CD4-positive, alpha-beta T cell (primary cell): ENCODE measurements at regions of chr2 and their contacts with region 1.

Region 1: DNA sequence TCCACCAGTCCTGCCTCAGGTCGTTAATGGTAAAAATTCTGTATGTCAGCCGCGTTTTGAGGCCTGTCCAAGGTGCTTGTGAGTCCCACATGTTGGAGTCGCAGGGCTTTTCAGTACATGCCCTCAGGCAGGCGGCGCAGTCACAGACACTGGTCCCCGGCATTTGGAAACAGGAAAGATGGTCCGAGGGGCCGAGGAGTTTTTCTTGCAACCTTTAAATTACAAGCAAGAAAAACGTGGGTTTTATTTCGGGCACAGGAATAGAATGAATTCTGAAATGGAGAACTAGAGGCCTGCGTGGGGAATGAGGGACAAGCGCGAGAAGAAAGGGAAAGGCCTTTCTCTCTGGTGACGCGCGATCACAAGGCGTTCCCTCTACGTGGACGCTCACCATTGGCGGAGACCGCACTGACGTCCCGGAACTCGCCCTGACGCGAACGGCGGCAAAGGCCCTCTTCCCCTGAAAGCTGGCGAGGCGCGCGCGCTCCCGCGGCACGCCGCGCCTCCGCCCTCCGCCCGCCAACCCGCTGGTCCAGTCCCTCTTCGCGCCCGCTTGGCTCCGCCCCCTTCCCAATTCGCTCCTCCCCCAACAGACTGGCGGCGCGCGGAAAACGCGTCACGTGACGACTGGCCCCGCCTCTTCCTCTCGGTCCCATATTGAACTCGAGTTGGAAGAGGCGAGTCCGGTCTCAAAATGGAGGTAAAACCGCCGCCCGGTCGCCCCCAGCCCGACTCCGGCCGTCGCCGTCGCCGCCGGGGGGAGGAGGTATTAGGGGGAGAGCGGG is at the start of gene HNRNPA3:
- DNase-seq: peak; percentile 99 to 100 (median 100)
- ATAC-seq: peak; percentile 81
- H3K4me3 ChIP-seq: peak within 1 kb of the TSS; percentile 86
- H3K4me3 Mint-ChIP-seq: peak within 1 kb of the TSS; percentile 88
- H3K27ac ChIP-seq: peak within 1 kb of the TSS; percentile 98 to 100
- H3K27ac Mint-ChIP-seq: peak within 1 kb of the TSS; percentile 99
- H3K4me1 ChIP-seq: peaks cover 37% of the 10 kb centered on the region
- H3K4me1 Mint-ChIP-seq: peaks cover 61% of the 10 kb centered on the region
- H3K27me3 ChIP-seq: no peaks in the 10 kb centered on the region
- H3K27me3 Mint-ChIP-seq: no peaks in the 10 kb centered on the region
- CTCF ChIP-seq: peak; percentile 33
- total RNA-seq, gene HNRNPA3: 162 to 167 TPM

Region 2: GRCh38 chr2:177106212-177106611 is 106.1 kb before region 1 on chr2:
- CTCF ChIA-PET with region 1: no interaction called
- POLR2A ChIA-PET with region 1: no interaction called
- intact Hi-C with region 1: no loop called
- DNase-seq: peak in 1 of 14 experiments; percentile 1
- ATAC-seq: no peak
- H3K4me3 ChIP-seq: no peak overlapping the region
- H3K4me3 Mint-ChIP-seq: no peak overlapping the region
- H3K27ac ChIP-seq: no peak overlapping the region
- H3K27ac Mint-ChIP-seq: no peak overlapping the region
- H3K4me1 ChIP-seq: no peaks in the 10 kb centered on the region
- H3K4me1 Mint-ChIP-seq: no peaks in the 10 kb centered on the region
- H3K27me3 ChIP-seq: peaks cover 0 to 2% of the 10 kb centered on the region in 2 experiments
- H3K27me3 Mint-ChIP-seq: peaks cover 33% of the 10 kb centered on the region
- CTCF ChIP-seq: no peak

Region 3: DNA sequence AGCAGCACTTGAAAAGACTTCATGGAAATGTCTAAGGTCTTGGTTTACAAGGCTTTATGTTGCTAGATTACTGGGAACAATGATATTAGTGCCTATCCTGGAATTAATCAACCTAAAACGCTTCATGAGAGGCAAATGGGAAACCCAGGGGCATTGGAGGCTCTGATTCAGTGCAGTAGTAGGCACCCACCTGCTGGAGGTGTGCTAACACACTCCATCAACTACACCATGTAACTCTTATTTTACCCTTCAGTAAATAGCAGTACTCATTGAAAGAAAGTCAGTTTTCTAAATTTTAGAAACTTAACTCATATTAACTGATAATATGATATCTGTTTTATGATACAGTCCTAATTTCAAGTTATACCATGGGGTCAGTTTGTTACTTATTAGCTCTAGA is 17.1 kb before region 1 on chr2:
- CTCF ChIA-PET with region 1: no interaction called
- POLR2A ChIA-PET with region 1: interaction called, 14 read pairs
- intact Hi-C with region 1: no loop called
- DNase-seq: peak in 2 of 14 experiments; percentile 27 to 31
- ATAC-seq: peak; percentile 61
- H3K4me3 ChIP-seq: no peak overlapping the region
- H3K4me3 Mint-ChIP-seq: no peak overlapping the region
- H3K27ac ChIP-seq: no peak overlapping the region
- H3K27ac Mint-ChIP-seq: no peak overlapping the region
- H3K4me1 ChIP-seq: no peaks in the 10 kb centered on the region
- H3K4me1 Mint-ChIP-seq: no peaks in the 10 kb centered on the region
- H3K27me3 ChIP-seq: no peaks in the 10 kb centered on the region
- H3K27me3 Mint-ChIP-seq: no peaks in the 10 kb centered on the region
- CTCF ChIP-seq: no peak

Region 4: GRCh38 chr2:177201919-177202346 is 10.4 kb before region 1 on chr2:
- CTCF ChIA-PET with region 1: no interaction called
- POLR2A ChIA-PET with region 1: interaction called, 14 read pairs
- intact Hi-C with region 1: no loop called
- DNase-seq: no peak
- ATAC-seq: no peak
- H3K4me3 ChIP-seq: no peak overlapping the region
- H3K4me3 Mint-ChIP-seq: no peak overlapping the region
- H3K27ac ChIP-seq: no peak overlapping the region
- H3K27ac Mint-ChIP-seq: no peak overlapping the region
- H3K4me1 ChIP-seq: no peaks in the 10 kb centered on the region
- H3K4me1 Mint-ChIP-seq: no peaks in the 10 kb centered on the region
- H3K27me3 ChIP-seq: no peaks in the 10 kb centered on the region
- H3K27me3 Mint-ChIP-seq: no peaks in the 10 kb centered on the region
- CTCF ChIP-seq: no peak

Region 5: DNA sequence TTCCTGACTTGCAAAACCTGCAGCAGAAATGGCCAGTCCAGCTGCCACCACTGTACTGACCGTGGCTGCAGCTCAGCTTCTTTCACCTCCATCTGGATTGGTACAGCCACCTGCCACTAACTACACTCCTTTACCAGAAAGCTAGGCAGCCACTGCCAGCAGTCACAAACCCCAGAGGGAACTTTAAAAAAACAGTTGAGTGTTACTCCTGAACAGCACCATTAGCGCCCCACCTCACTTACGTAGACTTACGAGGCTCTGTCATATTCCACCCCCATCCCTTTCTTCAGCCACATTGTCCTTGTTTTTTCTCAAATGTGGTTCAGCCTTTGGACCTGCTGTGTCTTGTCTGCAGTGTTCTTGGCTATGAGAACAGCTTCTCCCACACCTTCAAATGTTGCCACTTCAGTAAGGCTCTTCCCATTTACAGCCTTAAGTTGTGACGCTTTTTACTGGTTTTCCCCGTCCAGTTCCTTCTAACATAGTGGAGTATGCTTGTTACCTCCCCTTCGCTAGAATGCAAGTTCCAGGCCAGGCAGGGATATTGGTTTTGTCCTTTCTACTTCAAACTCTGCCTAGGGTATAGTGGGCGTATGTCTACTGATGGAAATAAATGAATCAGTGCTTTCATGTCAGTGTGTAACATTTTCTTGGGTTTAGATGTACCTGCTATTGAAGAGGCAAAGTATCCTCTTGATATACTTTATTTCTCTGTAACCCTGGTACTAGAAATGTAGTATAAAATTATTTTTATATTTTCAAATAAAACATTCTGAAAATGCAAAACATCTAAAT is 17.3 kb after region 1 on chr2:
- CTCF ChIA-PET with region 1: interaction called, 4 read pairs
- POLR2A ChIA-PET with region 1: interaction called, 23 read pairs
- intact Hi-C with region 1: no loop called
- DNase-seq: no peak
- ATAC-seq: peak; percentile 12
- H3K4me3 ChIP-seq: no peak overlapping the region
- H3K4me3 Mint-ChIP-seq: no peak overlapping the region
- H3K27ac ChIP-seq: no peak overlapping the region
- H3K27ac Mint-ChIP-seq: peak overlapping the region; percentile 33
- H3K4me1 ChIP-seq: no peaks in the 10 kb centered on the region
- H3K4me1 Mint-ChIP-seq: peaks cover 62% of the 10 kb centered on the region
- H3K27me3 ChIP-seq: no peaks in the 10 kb centered on the region
- H3K27me3 Mint-ChIP-seq: no peaks in the 10 kb centered on the region
- CTCF ChIP-seq: no peak

Region 6: DNA sequence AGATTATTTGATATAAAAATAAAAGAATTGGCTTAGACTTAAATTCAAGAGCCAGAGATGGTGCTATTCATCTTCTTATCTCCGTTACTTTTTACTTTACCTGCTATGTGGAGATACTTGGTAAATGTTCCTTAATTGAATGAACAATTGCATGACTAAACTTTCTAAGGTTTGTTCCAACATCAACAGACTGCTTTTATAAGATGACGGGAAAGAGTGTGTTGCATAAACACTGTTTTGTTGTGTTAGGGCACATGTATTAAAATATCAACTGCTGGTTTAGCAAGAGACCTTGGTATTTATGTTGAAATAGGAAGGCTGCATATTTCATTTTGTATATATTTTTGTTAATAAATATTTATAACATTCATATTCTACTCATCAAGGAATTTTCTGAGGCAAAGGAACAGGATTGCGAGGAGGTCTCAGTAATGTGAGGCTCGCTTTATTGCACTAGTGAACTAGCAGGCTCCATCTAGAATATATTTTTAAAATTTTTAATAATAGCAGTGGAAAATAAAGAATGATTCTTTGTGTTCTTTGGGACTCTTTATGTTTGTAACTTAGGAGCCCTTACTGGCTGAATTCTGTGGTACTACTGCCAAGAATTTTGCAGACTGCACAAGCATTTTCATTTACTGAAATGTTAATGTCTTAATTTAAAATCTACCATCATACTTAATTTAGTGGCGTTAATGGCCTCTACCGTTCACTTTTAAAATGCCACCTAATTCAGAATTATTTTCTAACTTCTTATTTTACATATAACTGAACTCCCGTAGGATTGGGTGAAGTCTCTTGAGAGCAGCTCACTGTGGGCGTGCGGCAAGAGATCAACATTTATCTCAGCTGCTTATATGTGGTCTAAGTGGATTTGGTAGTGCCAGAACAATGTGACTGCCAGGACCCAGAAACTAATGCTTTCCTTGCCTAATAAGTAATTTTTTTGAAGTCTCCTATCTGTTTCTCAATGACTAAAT is 63.0 kb after region 1 on chr2:
- CTCF ChIA-PET with region 1: no interaction called
- POLR2A ChIA-PET with region 1: interaction called, 10 read pairs
- intact Hi-C with region 1: no loop called
- DNase-seq: no peak
- ATAC-seq: no peak
- H3K4me3 ChIP-seq: no peak overlapping the region
- H3K4me3 Mint-ChIP-seq: no peak overlapping the region
- H3K27ac ChIP-seq: no peak overlapping the region
- H3K27ac Mint-ChIP-seq: no peak overlapping the region
- H3K4me1 ChIP-seq: no peaks in the 10 kb centered on the region
- H3K4me1 Mint-ChIP-seq: no peaks in the 10 kb centered on the region
- H3K27me3 ChIP-seq: no peaks in the 10 kb centered on the region
- H3K27me3 Mint-ChIP-seq: no peaks in the 10 kb centered on the region
- CTCF ChIP-seq: no peak

Region 7: GRCh38 chr2:177314194-177314593 is 101.9 kb after region 1 on chr2:
- CTCF ChIA-PET with region 1: no interaction called
- POLR2A ChIA-PET with region 1: interaction called, 19 read pairs
- intact Hi-C with region 1: no loop called
- DNase-seq: no peak
- ATAC-seq: no peak
- H3K4me3 ChIP-seq: no peak overlapping the region
- H3K4me3 Mint-ChIP-seq: no peak overlapping the region
- H3K27ac ChIP-seq: no peak overlapping the region
- H3K27ac Mint-ChIP-seq: peak overlapping the region; percentile 90
- H3K4me1 ChIP-seq: peaks cover 19% of the 10 kb centered on the region
- H3K4me1 Mint-ChIP-seq: peaks cover 38% of the 10 kb centered on the region
- H3K27me3 ChIP-seq: no peaks in the 10 kb centered on the region
- H3K27me3 Mint-ChIP-seq: no peaks in the 10 kb centered on the region
- CTCF ChIP-seq: no peak